ENCODE measurements at regions of chr6 and their contacts with region 1.

Region 1: DNA sequence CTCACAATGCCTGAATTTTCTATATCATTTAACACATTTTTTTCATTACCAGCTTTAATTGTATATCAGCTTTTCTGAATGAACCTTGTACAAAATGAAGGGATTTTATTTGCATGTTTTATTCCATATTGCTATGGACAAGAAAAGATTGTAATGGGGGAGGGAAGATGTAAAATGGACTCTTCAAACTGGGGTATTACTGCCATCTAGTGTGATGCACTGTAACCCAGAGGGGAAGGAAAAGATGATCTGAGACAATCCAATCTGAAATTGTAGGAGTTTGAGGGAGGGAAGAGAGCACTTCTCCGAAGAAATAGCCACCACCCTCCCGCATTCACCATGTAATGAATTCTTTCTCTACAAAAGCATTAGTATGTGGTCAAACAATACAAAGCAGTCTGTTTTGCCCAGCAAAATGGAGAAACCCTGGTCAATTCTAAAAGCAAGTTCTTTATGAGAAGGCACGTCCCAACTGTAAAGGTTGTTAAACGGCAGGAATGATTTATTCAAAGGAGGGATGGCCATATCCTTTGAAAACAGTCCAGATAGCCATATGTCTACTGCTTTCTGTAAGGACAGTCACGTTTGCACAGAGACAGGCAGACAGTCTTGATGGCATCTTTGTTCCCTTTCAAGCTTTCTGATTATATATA is 679.5 kb upstream of the NRSN1 start:
- DNase-seq: peak; percentile 79
- ATAC-seq: peak; percentile 81
- H3K4me3 ChIP-seq: no peak overlapping the region
- H3K27ac ChIP-seq: no peak overlapping the region
- H3K4me1 ChIP-seq: 0 out of 2 replicates have a peak, but pooled peaks cover 4% of the 10 kb centered on the region
- H3K27me3 ChIP-seq: no peaks in the 10 kb centered on the region
- CTCF ChIP-seq: peak; percentile 85

Region 2: GRCh38 chr6:23174781-23175361 is 271.6 kb before region 1 on chr6:
- CTCF ChIA-PET with region 1: no interaction called
- POLR2A ChIA-PET with region 1: no interaction called
- intact Hi-C with region 1: no loop called
- DNase-seq: peak; percentile 95
- ATAC-seq: peak; percentile 86
- H3K4me3 ChIP-seq: peak overlapping the region; percentile 36; the same call in 1 of the 2 replicates
- H3K27ac ChIP-seq: peak overlapping the region; percentile 95
- H3K4me1 ChIP-seq: peaks cover 31% of the 10 kb centered on the region
- H3K27me3 ChIP-seq: no peaks in the 10 kb centered on the region
- CTCF ChIP-seq: no peak

Region 3: GRCh38 chr6:23394681-23395080 is 51.8 kb before region 1 on chr6:
- CTCF ChIA-PET with region 1: no interaction called
- POLR2A ChIA-PET with region 1: no interaction called
- intact Hi-C with region 1: no loop called
- DNase-seq: no peak
- ATAC-seq: no peak
- H3K4me3 ChIP-seq: no peak overlapping the region
- H3K27ac ChIP-seq: no peak overlapping the region
- H3K4me1 ChIP-seq: no peaks in the 10 kb centered on the region
- H3K27me3 ChIP-seq: no peaks in the 10 kb centered on the region
- CTCF ChIP-seq: no peak

Region 4: DNA sequence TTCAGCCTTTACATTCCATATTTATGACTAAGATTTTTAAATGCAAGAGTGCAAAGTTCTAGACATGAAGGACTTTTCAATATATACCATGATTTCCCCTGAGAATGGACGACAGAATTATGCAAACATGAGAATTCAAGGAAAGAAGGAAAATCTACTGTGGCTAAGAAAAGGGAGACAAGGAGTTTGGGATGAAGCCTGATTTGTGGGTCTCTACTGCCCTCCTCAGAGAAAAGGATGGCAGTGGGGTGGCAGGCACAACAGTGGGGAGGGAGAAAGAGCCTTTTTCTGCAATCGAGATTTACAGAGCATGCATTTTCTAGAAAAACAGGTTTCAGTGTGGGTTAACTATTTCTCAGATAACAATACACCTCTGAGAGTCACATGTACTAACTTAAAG is 212.6 kb after region 1 on chr6:
- CTCF ChIA-PET with region 1: no interaction called
- POLR2A ChIA-PET with region 1: no interaction called
- intact Hi-C with region 1: loop called (anchors 2 kb)
- DNase-seq: peak; percentile 64
- ATAC-seq: peak; percentile 90
- H3K4me3 ChIP-seq: no peak overlapping the region
- H3K27ac ChIP-seq: no peak overlapping the region
- H3K4me1 ChIP-seq: peaks cover 7% of the 10 kb centered on the region; the same call in 1 of the 2 replicates
- H3K27me3 ChIP-seq: no peaks in the 10 kb centered on the region
- CTCF ChIP-seq: peak; percentile 80